Left cardiac atrium (tissue), 4 donors: ENCODE measurements at regions of chr14 and their contacts with region 1.

Region 1: DNA sequence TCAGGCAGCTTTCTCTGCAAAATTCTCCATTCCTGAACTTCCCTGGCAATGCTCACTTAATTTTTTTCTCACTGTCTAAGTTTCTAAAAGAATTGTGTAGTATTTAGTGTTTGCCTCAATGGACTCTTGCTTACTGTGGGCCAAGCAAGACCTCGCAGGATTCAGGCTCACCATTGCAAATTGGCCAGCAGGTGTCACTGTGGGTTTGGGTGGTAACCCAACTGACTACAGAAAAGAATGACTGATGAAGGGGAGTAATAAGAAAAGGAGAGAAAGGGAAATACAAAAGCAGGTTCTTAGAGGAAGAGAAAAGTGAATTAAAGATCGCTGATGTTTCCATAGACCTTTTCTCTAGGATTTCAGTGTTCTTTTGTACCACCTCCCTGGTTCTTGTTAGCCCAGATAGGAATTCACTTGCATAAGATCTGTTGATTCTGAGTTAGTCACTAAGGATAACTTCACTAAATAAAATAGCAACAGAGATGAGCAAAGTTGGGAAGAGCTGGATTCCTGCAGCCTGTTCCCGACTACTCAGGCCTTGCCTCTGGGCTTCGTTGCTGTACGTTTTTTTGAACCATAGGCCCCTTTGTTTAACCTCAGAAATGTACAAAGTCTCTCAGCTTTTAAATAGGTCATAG is 386.5 kb upstream of the DDHD1 start:
- DNase-seq: peak; percentile 76
- ATAC-seq: peak; percentile 88 to 95

Region 2: DNA sequence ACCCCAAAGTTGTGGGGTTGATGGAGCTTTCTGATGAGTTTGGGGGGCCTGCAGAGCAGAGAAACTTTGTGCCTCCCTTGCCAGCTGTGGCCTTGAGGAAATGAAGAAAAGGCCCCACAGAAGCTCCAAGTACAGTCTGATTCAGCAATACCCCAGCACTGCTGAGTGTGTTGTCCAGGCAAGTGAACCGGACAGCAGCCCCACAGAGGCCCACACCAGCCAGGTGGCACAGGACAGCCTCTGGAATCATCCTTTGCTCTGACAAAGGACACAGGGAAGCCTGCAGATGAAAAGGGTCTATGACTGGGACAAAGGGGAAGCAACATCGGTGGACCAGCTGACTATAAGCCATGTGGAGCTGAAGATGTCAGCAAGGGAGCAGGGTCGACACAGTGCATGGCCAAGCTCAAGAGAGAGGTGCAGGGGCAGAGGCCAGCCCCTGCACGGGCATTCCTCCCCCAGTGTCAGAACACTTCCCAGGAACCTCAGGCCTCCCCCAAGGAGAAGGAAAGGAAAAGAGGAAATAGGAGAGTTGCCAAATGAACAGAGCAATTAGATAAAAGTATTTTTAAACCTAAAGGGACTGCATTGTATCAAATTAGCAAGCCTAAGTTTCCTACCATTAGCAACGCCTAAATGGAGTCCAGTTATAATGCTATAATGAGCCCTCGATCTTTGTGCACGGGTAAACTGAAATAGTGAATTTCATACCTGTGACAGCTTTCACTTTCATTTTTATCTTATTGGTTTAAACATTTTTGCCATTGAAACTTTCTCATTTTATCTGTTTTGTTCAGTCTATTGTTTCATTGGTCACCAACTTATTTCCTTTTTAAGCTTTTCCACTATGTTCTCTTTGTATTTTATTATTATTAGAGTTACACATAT is 1318.4 kb before region 1 on chr14:
- intact Hi-C with region 1: no loop called
- DNase-seq: no peak
- ATAC-seq: peak in 1 of 2 donors; percentile 5

Region 3: DNA sequence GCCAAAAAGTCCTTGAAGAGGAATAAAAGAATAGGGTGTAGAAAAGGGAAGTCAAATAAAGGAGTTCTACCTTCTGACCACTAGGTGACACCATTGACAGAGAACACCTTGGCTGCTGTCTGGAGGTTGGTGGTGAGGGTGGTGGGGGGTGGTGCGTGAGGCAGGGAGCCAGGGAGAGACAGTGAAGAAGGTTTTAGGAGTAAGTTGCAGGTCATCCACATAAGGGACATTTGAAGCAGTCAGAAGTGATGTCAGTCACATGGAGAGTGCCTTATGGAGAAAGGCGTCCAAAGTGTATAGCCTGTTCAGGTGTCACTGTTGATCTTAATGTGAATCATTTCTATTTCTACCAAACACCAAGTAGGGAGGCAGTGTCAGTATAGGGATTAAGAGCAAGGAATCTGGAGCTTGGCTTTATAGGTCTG is 107.2 kb before region 1 on chr14:
- intact Hi-C with region 1: loop called in 1 of 2 experiments (anchors 10 kb)
- DNase-seq: peak; percentile 19
- ATAC-seq: peak in 1 of 2 donors; percentile 43

Region 4: DNA sequence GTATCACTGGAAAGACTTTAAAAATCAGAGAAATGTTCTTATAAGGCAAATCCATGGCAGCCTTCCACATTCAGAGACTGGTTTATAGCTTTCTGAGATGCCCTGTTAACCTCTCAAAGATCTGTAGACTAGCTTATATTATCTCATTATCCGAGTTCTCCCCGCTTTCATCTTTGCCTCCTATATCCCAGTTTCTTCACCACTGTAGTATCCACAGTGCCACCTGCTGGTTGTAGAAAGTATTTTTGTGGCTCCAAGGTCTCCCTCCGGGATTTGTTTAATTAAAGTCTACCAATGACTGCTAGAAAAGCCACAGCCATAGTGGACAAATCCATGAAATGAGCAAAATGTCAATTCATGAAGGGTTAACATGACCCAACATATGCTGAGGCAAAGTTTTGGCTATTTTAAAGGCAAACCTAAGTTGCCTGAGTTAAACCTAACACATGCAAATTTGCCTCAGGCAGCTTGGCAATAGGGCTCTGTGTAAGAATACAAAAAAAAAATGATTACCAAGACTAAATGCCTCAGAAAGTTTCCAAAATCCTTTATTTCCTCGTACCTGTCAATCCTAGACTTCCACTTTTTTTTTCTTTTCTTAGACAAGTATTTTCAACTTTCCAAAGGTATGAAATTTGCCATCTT is 635.8 kb after region 1 on chr14:
- intact Hi-C with region 1: loop called (anchors 2 to 5 kb)
- DNase-seq: peak; percentile 58
- ATAC-seq: peak; percentile 24 to 60

Region 5: DNA sequence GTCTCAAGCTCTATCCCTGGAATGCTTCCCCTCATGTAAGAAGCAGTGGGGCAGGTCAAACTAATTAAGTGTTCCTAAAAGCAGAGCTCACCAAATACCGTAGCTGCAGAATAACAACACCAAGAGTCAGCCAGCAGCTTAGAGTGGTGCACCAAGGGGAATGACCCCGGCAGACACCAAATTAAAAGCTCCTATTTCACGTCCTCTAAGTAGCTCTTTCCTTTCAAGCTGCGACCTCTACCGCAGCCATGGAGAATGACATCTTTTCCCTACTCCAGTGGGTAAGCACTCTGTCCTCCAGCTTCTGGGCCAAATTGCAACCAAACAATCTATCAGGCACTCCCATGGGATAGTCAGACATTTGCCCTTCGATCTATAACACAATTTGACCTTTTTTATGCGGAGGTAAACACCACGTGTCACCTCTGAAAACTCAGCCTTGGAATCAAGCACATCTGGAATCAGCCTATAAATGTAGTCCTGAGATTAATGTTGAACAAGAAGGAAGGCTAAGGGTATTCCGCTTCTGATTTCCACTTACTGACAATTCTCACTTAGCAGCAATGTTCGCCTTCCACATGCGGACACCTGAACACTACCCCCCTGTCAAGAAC is 789.6 kb after region 1 on chr14:
- intact Hi-C with region 1: loop called in 1 of 2 experiments (anchors 1 kb)
- DNase-seq: peak; percentile 41
- ATAC-seq: peak; percentile 87 to 90

Region 6: GRCh38 chr14:54347997-54348611 is 808.5 kb after region 1 on chr14:
- intact Hi-C with region 1: loop called (anchors 5 to 10 kb)
- DNase-seq: no peak
- ATAC-seq: peak in 1 of 2 donors; percentile 56